ENCODE measurements at regions of chr4 and their contacts with region 1.

Region 1: DNA sequence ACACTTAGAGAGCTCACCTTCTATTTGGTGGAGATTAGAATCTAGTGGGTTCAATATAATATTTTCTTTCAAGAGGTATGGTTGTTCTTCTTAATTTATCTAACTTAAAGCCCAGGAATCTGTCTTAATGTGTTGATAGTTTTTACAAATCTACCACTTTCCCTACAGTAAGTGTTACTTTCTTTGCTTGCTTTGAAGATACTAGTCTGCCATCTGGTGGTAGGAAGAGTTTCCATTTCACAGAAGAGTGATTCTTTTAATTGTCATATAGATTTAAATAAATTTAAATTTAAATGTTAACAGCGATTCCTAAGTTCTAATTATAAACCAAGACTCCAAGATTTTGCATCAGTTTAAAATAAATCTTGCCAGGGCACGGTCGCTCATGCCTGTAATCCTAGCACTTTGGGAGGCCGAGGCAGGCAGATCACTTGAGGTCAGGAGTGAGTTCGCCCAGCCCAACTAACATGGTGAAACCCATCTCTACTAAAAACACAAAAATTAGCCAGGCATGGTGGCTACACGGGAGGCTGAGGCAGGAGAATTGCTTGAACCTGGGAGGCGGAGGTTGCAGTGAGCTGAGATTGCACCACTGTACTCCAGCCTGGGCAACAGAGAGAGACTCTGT is 43.5 kb downstream of the NUDT9 start:
- DNase-seq: no peak
- ATAC-seq: peak in 1 of 4 donors; percentile 79
- H3K4me3 ChIP-seq: no peak overlapping the region
- H3K27ac ChIP-seq: no peak overlapping the region
- H3K4me1 ChIP-seq: no peaks in the 10 kb centered on the region
- H3K27me3 ChIP-seq: no peaks in the 10 kb centered on the region
- CTCF ChIP-seq: peak; percentile 68

Region 2: GRCh38 chr4:87260477-87260876 is 205.4 kb before region 1 on chr4:
- intact Hi-C with region 1: loop called in 1 of 2 experiments (anchors 10 kb)
- DNase-seq: no peak
- ATAC-seq: no peak
- H3K4me3 ChIP-seq: no peak overlapping the region
- H3K27ac ChIP-seq: no peak overlapping the region
- H3K4me1 ChIP-seq: no peaks in the 10 kb centered on the region
- H3K27me3 ChIP-seq: no peaks in the 10 kb centered on the region
- CTCF ChIP-seq: no peak

Region 3: GRCh38 chr4:87354168-87355102 is 111.4 kb before region 1 on chr4:
- intact Hi-C with region 1: loop called in 1 of 2 experiments (anchors 5 kb)
- DNase-seq: no peak
- ATAC-seq: peak in 2 of 4 donors; percentile 20 to 46
- H3K4me3 ChIP-seq: no peak overlapping the region
- H3K27ac ChIP-seq: no peak overlapping the region
- H3K4me1 ChIP-seq: no peaks in the 10 kb centered on the region
- H3K27me3 ChIP-seq: no peaks in the 10 kb centered on the region
- CTCF ChIP-seq: no peak

Region 4: GRCh38 chr4:87375719-87376291 is 90.0 kb before region 1 on chr4:
- intact Hi-C with region 1: loop called (anchors 5 kb)
- DNase-seq: no peak
- ATAC-seq: peak; percentile 39 to 87 (median 68)
- H3K4me3 ChIP-seq: no peak overlapping the region
- H3K27ac ChIP-seq: no peak overlapping the region
- H3K4me1 ChIP-seq: no peaks in the 10 kb centered on the region
- H3K27me3 ChIP-seq: no peaks in the 10 kb centered on the region
- CTCF ChIP-seq: peak; percentile 69

Region 5: GRCh38 chr4:87506974-87507701 is 41.3 kb after region 1 on chr4:
- intact Hi-C with region 1: no loop called
- DNase-seq: no peak
- ATAC-seq: peak; percentile 32 to 51 (median 41)
- H3K4me3 ChIP-seq: no peak overlapping the region
- H3K27ac ChIP-seq: peak overlapping the region; percentile 13
- H3K4me1 ChIP-seq: no peaks in the 10 kb centered on the region
- H3K27me3 ChIP-seq: no peaks in the 10 kb centered on the region
- CTCF ChIP-seq: no peak

Region 6: DNA sequence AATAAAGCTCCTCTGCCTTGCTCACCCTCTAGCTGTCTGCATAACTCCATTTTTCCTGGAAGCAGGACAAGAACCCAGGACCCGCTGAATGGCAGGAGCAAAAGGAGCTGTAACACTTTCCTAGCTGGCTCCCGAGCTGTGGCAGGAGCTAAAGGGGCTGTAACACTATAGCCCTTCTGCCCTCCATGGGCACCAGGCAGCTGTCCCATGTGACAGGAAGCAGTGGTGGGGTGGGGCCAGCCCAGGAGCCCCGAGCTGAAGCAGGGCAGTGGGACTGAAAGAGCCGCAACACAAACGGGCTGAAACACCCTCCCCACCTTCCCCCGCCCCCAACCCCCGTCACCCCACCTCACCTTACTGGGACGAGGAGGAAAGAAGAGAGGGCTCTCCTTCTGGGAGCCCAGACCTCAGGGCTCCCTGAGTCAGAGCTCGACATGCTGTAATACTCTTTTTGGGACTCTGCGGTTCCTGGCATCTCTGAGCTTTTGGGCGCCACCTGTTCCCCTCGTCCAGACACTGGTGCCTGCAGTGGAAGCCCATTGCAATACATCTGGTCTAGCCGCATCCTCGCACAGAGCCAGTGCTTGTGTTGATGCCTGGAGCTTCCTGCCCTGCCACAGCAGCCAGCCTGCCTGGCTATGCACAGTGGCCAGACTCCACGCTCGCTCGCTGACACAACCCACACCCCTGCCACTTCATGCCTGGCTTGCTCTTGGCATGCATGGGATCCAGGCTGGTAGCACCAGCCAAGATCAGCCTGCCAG is 779.1 kb after region 1 on chr4:
- intact Hi-C with region 1: no loop called
- DNase-seq: peak; percentile 77 to 86
- ATAC-seq: peak; percentile 88 to 93 (median 90)
- H3K4me3 ChIP-seq: peak overlapping the region; percentile 59
- H3K27ac ChIP-seq: peak overlapping the region; percentile 93
- H3K4me1 ChIP-seq: peaks cover 38% of the 10 kb centered on the region
- H3K27me3 ChIP-seq: no peaks in the 10 kb centered on the region
- CTCF ChIP-seq: no peak